ENCODE measurements at regions of chr12 and their contacts with region 1.

Region 1: DNA sequence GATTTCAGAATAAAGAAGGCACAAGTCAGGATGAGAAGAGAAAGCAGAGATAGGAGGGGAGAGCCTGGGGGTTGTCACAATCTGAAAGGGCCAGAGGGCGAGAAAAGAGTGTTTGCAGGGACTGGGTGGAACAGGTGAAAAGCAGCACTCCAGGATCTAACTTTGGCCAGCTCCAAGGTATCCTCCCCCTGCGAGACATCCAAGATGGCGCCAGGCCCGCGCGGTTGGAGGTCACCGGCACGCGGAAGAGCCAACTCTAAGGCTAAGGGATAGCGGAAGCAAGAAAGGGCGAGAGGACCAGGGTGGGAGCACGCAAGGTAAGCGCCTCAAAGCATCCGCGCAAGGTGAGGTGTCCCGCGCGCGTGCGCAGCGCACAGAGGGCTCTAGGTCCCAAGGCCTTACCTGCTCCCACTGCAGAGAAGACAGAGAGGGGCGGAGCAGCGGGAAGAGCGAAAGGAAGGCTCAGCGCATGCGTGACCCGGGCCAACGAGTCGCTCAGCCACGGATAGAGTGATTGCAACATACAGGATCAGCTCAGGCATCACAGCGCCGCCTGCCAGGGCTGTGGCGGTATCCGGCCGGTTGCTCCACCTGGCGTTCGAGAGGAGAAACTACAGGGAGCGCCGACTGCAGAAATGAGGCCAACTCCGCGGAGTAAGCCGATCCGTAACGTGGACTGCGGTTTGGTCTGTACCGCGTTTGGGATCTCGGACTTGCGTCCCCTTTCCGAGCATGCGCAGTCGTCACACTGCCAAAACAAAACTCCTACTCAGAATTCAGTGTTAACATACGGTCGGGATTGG is at the start of gene ATP5MC2:
- DNase-seq: peak; percentile 96 to 97
- ATAC-seq: peak; percentile 95 to 98 (median 97)
- H3K4me3 ChIP-seq: peak within 1 kb of the TSS; percentile 48 to 98 (median 72)
- H3K27ac ChIP-seq: peak within 1 kb of the TSS; percentile 87 to 98 (median 90)
- H3K4me1 ChIP-seq: peaks cover 3 to 51% (median 34%) of the 10 kb centered on the region in 9 donors
- H3K27me3 ChIP-seq: peaks cover 0 to 12% (median 0%) of the 10 kb centered on the region in 7 donors
- CTCF ChIP-seq: peak; percentile 96 to 100 (median 99)
- total RNA-seq, gene ATP5MC2: 499 to 627 (median 546) TPM

Region 2: GRCh38 chr12:53551889-53552291 is 124.0 kb before region 1 on chr12:
- intact Hi-C with region 1: loop called in 1 of 10 experiments (anchors 5 kb)
- DNase-seq: no peak
- ATAC-seq: peak in 3 of 8 donors; percentile 17 to 58 (median 37)
- H3K4me3 ChIP-seq: no peak overlapping the region
- H3K27ac ChIP-seq: no peak overlapping the region
- H3K4me1 ChIP-seq: no peaks in the 10 kb centered on the region
- H3K27me3 ChIP-seq: no peaks in the 10 kb centered on the region
- CTCF ChIP-seq: no peak

Region 3: DNA sequence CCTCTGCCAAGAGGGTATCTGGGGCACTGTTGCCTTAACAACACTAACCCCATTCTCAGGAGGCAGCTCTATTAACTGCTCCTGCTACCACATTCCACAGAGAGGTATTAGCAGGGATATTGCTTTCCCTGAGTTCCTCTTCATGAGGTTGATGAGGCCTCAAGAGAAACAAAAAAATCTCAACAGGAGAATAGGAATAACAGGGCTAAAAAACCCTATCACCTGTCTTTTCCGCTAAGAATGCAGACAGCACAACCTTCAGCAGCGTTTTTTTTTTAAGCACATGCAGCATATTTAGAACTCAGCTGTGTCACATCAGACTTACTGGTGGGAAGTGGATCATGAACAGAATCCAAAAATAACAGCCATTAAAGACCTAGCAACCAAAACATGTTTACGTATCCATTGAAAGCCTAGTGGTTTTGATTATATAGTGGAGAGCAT is 78.9 kb before region 1 on chr12:
- intact Hi-C with region 1: loop called in 3 of 10 experiments (anchors 5 kb)
- DNase-seq: no peak
- ATAC-seq: peak; percentile 76 to 94 (median 89)
- H3K4me3 ChIP-seq: peak overlapping the region in 1 of 10 donors; percentile 5
- H3K27ac ChIP-seq: peak overlapping the region; percentile 19 to 81 (median 72)
- H3K4me1 ChIP-seq: peaks cover 14 to 90% (median 71%) of the 10 kb centered on the region in 9 donors
- H3K27me3 ChIP-seq: no peaks in the 10 kb centered on the region
- CTCF ChIP-seq: no peak

Region 4: GRCh38 chr12:53625946-53626701 is 49.7 kb before region 1 on chr12 and contains the start of gene ATF7:
- intact Hi-C with region 1: loop called in 8 of 10 experiments (anchors 1 to 10 kb)
- DNase-seq: peak; percentile 98 to 99
- ATAC-seq: peak; percentile 97 to 99 (median 98)
- H3K4me3 ChIP-seq: peak within 1 kb of the TSS; percentile 57 to 74 (median 69)
- H3K27ac ChIP-seq: peak within 1 kb of the TSS; percentile 79 to 98 (median 96)
- H3K4me1 ChIP-seq: peaks cover 5 to 42% (median 36%) of the 10 kb centered on the region in 9 donors
- H3K27me3 ChIP-seq: no peaks in the 10 kb centered on the region
- CTCF ChIP-seq: peak in 2 of 9 donors; percentile 7 to 14
- total RNA-seq, gene ATF7: 28.2 to 47.8 (median 34.4) TPM